HCT116 (cell line): ENCODE measurements at regions of chr12 and their contacts with region 1.

Region 1: GRCh38 chr12:32051559-32052414 is 54.9 kb upstream of the BICD1 start:
- DNase-seq: peak; percentile 48
- ATAC-seq: peak; percentile 82
- H3K4me3 ChIP-seq: no peak overlapping the region
- H3K27ac ChIP-seq: no peak overlapping the region
- H3K4me1 ChIP-seq: peaks cover 0 to 13% of the 10 kb centered on the region in 2 experiments; a peak in 2 of 4 replicates
- H3K27me3 ChIP-seq: no peaks in the 10 kb centered on the region
- CTCF ChIP-seq: no peak
- POLR2A ChIP-seq: no peak
- RAD21 ChIP-seq: no peak

Region 2: GRCh38 chr12:32062881-32063280 is 11.1 kb after region 1 on chr12:
- CTCF ChIA-PET with region 1: interaction called, 11 read pairs
- POLR2A ChIA-PET with region 1: no interaction called
- RAD21 ChIA-PET with region 1: no interaction called
- intact Hi-C with region 1: no loop called
- DNase-seq: no peak
- ATAC-seq: no peak
- H3K4me3 ChIP-seq: no peak overlapping the region
- H3K27ac ChIP-seq: no peak overlapping the region
- H3K4me1 ChIP-seq: no peaks in the 10 kb centered on the region
- H3K27me3 ChIP-seq: no peaks in the 10 kb centered on the region
- CTCF ChIP-seq: no peak
- POLR2A ChIP-seq: no peak
- RAD21 ChIP-seq: no peak

Region 3: DNA sequence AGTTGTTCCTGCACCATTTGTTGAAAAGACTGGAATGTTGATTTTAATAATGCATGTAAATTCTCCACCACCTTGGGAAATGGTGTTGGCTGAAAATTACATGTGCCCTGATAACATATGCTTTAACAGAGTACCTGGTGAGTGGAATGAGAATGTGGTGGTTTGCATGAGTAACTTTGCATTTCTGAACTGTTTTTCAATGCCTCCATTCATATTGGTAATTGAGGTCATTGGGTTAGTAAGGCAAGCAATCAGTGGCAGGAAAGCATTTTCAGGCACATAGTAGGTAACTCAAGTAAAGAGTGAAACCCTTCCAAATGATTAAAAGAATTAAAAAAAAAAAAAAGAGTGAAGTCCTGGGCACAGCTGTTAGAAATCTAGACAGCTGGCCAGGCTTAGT is 22.6 kb after region 1 on chr12:
- CTCF ChIA-PET with region 1: no interaction called
- POLR2A ChIA-PET with region 1: no interaction called
- RAD21 ChIA-PET with region 1: no interaction called
- intact Hi-C with region 1: no loop called
- DNase-seq: no peak
- ATAC-seq: no peak
- H3K4me3 ChIP-seq: no peak overlapping the region
- H3K27ac ChIP-seq: no peak overlapping the region
- H3K4me1 ChIP-seq: no peaks in the 10 kb centered on the region
- H3K27me3 ChIP-seq: no peaks in the 10 kb centered on the region
- CTCF ChIP-seq: no peak
- POLR2A ChIP-seq: no peak
- RAD21 ChIP-seq: no peak